ENCODE measurements at regions of chr20 and their contacts with region 1.

Region 1: DNA sequence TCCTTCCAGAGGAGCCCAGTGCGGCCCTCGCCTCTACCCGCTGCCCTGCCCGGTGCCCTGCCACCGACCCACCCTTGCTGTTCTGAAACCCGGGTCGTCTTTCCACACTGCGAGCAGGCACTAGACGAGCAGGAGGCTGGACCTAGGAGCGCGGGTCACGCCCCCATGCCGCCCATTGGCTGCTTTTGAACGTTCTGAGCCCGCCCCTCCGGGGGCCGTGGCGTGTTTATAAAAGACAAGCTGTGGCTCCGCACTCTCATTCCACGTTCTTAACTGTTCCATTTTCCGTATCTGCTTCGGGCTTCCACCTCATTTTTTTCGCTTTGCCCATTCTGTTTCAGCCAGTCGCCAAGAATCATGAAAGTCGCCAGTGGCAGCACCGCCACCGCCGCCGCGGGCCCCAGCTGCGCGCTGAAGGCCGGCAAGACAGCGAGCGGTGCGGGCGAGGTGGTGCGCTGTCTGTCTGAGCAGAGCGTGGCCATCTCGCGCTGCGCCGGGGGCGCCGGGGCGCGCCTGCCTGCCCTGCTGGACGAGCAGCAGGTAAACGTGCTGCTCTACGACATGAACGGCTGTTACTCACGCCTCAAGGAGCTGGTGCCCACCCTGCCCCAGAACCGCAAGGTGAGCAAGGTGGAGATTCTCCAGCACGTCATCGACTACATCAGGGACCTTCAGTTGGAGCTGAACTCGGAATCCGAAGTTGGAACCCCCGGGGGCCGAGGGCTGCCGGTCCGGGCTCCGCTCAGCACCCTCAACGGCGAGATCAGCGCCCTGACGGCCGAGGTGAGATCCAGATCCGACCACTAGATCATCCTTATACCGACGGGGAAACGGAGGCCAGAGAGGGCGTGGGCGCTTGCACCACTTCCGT is at the start of gene ID1:
- DNase-seq: peak; percentile 97
- H3K4me3 ChIP-seq: peak within 1 kb of the TSS; percentile 58 to 60
- H3K27ac ChIP-seq: peak within 1 kb of the TSS in 1 of 2 donors; percentile 67
- H3K4me1 ChIP-seq: peaks cover 16% of the 10 kb centered on the region
- H3K27me3 ChIP-seq: no peaks in the 10 kb centered on the region
- CTCF ChIP-seq: no peak
- POLR2A ChIP-seq: no peak
- total RNA-seq, gene ID1: 124 to 128 TPM

Region 2: DNA sequence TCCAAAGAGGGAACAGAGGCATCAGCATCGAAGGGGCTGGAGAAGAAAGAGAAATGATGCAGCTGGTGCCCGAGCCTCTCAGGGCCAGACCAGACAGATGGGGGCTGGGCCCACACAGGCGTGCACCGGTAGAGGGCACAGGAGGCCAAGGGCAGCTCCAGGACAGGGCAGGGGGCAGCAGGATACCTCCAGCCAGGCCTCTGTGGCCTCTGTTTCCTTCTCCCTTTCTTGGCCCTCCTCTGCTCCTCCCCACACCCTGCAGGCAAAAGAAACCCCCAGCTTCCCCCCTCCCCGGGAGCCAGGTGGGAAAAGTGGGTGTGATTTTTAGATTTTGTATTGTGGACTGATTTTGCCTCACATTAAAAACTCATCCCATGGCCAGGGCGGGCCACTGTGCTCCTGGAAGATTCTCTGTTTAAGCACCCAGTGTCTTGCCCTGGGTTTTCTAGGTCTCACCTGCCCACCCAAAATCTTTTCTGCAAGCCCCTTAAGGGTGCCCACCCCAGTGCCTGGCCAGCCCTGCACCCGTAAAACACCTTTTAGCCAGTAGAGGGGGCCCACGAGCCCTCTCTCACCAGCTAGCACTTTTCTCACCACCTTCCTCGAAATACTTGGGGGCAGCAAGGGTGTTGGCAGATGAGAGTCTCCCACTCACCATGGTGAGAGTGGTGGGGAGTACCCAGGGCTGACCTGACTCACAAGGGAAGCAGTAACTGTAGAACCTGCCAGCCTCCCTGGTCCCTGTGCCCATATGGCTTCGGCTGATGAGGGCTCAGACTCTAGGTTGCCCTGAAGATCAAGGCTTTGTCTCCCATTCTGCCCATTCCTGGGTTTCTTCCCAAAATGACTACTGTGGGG is 35.9 kb before region 1 on chr20:
- intact Hi-C with region 1: loop called (anchors 5 kb)
- DNase-seq: peak; percentile 61
- H3K4me3 ChIP-seq: no peak overlapping the region
- H3K27ac ChIP-seq: peak overlapping the region in 1 of 2 donors; percentile 92
- H3K4me1 ChIP-seq: peaks cover 9% of the 10 kb centered on the region
- H3K27me3 ChIP-seq: no peaks in the 10 kb centered on the region
- CTCF ChIP-seq: peak; percentile 50 to 71 (median 51)
- POLR2A ChIP-seq: no peak

Region 3: DNA sequence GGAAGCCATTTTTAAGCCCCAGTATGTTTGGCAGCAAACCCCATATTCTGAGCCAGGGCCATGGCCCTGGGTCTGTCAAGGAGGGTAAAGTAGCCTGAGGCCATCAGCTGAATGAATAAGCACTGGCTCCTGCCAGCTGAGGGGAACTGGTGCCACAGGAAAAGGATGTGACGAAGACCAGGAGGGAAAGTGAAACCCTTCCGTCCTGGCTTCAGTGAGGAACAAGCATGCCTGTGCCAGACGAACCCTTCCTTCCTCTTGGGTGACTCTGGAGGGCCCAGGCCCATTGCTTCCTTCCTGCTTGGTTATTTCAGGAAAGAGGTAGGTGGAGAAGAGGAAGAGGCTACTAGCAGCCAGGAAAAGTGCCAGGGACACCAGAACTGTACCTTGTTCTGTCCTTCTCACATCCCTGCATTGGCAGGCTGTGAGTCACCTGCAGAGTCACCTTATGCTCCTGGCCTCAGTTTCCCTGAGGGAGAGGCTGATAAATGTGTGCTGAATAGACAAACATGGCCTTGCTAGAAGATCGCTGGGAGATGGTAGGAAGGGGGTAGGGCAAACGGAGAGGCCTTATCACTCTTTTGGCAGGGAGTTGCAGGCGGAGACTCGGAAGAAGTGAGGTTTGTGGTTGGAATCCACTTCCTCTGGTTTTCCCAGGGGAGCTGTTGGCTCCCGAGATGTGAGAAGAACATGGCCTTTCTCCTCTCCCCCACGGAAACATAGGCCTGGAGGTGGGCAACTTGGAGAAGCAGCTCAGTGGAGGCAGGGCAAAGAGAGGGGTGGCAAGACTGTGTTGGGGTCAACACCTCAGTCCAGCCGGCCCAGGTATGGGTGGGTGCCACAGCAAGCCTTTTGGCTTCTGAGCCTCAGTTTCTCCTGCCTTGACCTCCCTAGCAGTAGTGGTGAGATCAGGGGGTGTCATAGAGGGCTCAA is 69.9 kb after region 1 on chr20:
- intact Hi-C with region 1: no loop called
- DNase-seq: peak; percentile 49
- H3K4me3 ChIP-seq: no peak overlapping the region
- H3K27ac ChIP-seq: peak overlapping the region; percentile 56 to 87
- H3K4me1 ChIP-seq: peaks cover 76% of the 10 kb centered on the region
- H3K27me3 ChIP-seq: no peaks in the 10 kb centered on the region
- CTCF ChIP-seq: no peak
- POLR2A ChIP-seq: no peak